ENCODE measurements at regions of chr4 and their contacts with region 1.

Region 1: DNA sequence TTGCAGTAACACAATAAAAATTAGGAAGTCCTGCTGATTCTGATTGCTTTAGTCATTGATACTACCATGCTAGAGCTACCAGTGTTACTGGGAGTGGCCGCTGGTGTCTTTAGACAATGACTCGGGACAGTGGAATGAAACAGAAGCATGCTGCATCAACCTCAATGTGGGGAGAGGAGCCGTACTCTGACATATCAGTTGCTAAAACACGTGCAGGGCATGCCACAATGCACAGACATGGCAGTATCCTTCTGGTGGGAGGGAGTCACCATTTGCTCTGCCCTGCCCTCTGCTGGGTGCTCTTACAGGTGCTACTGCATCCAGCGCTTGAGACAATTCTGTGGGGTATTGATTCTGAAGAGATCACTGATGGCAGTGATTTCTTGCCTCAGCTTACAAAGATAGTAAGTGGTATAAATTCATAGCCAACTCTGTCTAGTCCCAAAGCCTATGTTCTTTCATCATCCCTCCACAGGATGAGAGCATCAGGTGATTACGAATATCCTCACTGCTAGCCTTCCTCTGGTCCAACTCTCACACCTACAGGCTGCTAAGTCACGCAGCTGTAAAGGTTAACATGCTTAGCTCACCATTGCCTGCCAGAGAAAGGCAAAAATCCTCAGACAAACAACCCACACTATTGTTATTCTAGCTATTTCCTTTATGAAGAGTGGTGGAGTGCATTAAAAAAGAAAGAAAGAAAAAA is 43.7 kb downstream of the NSG1 start:
- DNase-seq: peak in 8 of 9 donors; percentile 11 to 53 (median 35)
- ATAC-seq: peak; percentile 87
- H3K4me3 ChIP-seq: no peak overlapping the region
- H3K4me3 Mint-ChIP-seq: no peak overlapping the region
- H3K27ac ChIP-seq: no peak overlapping the region
- H3K27ac Mint-ChIP-seq: no peak overlapping the region
- H3K4me1 ChIP-seq: no peaks in the 10 kb centered on the region
- H3K4me1 Mint-ChIP-seq: peaks cover 0 to 6% (median 3%) of the 10 kb centered on the region in 7 donors
- H3K27me3 ChIP-seq: no peaks in the 10 kb centered on the region
- H3K27me3 Mint-ChIP-seq: no peaks in the 10 kb centered on the region

Region 2: DNA sequence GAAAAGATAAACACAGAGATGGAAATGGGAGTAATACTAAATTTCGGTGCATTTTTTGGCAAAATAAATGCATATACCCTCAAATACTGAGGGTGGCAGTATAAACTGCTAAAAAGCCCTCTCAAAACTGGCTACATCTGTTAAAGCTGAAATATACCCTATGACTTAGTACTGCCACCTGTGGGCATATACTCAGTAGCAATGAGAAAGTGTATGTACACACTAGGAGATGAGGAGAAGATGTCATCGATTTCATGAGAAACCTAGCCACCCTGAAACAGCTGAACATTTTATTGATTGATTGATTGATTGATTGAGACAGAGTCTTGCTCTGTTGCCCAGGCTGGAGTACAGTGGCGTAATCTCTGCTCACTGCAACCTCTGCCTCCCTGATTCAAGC is 170.4 kb before region 1 on chr4:
- CTCF ChIA-PET with region 1: interaction called, 31 read pairs
- POLR2A ChIA-PET with region 1: no interaction called
- intact Hi-C with region 1: loop called in 1 of 2 experiments (anchors 1 kb)
- DNase-seq: peak in 7 of 9 donors; percentile 9 to 57 (median 44)
- ATAC-seq: peak; percentile 100
- H3K4me3 ChIP-seq: no peak overlapping the region
- H3K4me3 Mint-ChIP-seq: no peak overlapping the region
- H3K27ac ChIP-seq: no peak overlapping the region
- H3K27ac Mint-ChIP-seq: peak overlapping the region in 1 of 9 donors; percentile 51
- H3K4me1 ChIP-seq: peaks cover 0 to 8% of the 10 kb centered on the region in 2 donors
- H3K4me1 Mint-ChIP-seq: peaks cover 0 to 4% (median 0%) of the 10 kb centered on the region in 7 donors
- H3K27me3 ChIP-seq: no peaks in the 10 kb centered on the region
- H3K27me3 Mint-ChIP-seq: peaks cover 0 to 5% (median 0%) of the 10 kb centered on the region in 5 donors

Region 3: GRCh38 chr4:4492161-4492847 is 61.7 kb after region 1 on chr4:
- CTCF ChIA-PET with region 1: no interaction called
- POLR2A ChIA-PET with region 1: no interaction called
- intact Hi-C with region 1: no loop called
- DNase-seq: no peak
- ATAC-seq: no peak
- H3K4me3 ChIP-seq: no peak overlapping the region
- H3K4me3 Mint-ChIP-seq: peak overlapping the region in 1 of 10 donors; percentile 16
- H3K27ac ChIP-seq: no peak overlapping the region
- H3K27ac Mint-ChIP-seq: peak overlapping the region in 4 of 9 donors; percentile 2 to 30 (median 6)
- H3K4me1 ChIP-seq: no peaks in the 10 kb centered on the region
- H3K4me1 Mint-ChIP-seq: peaks cover 7 to 25% (median 11%) of the 10 kb centered on the region in 7 donors
- H3K27me3 ChIP-seq: no peaks in the 10 kb centered on the region
- H3K27me3 Mint-ChIP-seq: no peaks in the 10 kb centered on the region

Region 4: DNA sequence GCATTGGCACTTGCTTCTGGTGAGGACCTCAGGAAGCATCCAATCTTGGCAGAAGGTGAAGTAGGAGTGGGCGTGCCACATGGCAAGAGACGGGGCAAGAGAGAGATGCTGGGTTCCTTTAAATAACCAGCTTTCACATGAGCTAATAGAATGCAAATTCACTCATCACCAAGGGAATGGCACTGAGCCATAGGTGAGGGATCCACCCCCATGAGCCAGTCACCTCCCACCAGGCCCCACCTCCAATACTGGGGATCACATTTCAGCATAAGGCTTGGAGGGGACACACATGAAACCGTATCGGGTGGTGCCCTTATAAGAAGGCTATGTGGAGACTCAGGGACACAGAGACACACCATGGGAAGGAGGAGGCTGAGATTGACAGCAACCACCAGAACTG is 288.8 kb after region 1 on chr4:
- CTCF ChIA-PET with region 1: no interaction called
- POLR2A ChIA-PET with region 1: no interaction called
- intact Hi-C with region 1: no loop called
- DNase-seq: no peak
- ATAC-seq: no peak
- H3K4me3 ChIP-seq: no peak overlapping the region
- H3K4me3 Mint-ChIP-seq: no peak overlapping the region
- H3K27ac ChIP-seq: no peak overlapping the region
- H3K27ac Mint-ChIP-seq: no peak overlapping the region
- H3K4me1 ChIP-seq: no peaks in the 10 kb centered on the region
- H3K4me1 Mint-ChIP-seq: peaks cover 0 to 2% (median 0%) of the 10 kb centered on the region in 7 donors
- H3K27me3 ChIP-seq: no peaks in the 10 kb centered on the region
- H3K27me3 Mint-ChIP-seq: no peaks in the 10 kb centered on the region

Measured in naive thymus-derived CD4-positive, alpha-beta T cell (primary cell).